ENCODE measurements at regions of chr9 and their contacts with region 1.

Region 1: DNA sequence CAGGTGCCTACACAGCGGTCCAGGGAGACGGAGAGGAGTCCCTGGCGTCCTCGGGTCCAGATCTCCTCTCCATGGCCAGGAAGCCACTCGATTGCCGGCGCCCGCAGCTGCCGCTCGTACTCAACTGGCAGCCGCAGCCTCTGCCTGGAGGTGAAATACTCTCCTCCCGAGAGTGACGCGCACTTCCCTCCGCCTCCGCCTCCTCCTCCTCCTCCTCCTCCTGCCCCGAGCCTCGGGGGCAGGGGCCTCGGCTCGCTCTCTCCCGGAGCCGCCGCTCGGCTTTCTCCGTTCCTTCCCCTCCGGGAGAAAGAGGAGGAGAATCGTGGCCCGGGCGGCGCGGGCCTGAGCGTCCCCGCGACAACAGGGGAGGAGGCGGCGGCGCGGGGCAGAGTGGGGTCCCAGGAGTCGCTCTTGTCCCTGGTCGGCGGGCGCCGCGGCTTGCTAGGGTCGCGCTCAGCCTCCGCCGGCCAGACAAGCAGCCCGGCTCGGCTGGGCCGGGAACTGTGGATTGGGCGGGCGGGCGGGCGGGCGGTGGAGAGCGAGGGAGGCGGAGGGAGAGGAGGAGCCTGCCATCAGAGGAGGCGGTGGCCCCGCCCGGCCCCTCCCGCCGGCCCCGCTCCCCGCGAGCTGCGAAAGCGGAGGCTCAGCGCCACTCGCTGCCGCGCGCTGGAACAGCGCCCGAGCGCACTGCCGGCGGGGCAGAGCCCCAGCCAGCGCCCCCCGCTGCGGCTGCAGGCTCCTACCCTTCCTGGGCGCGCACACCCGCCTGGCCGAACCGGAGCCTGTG is at the start of gene CEMIP2:
- DNase-seq: peak; percentile 84 to 91 (median 87)
- H3K4me3 ChIP-seq: peak within 1 kb of the TSS; percentile 98
- H3K4me3 Mint-ChIP-seq: peak within 1 kb of the TSS; percentile 91 to 100 (median 97)
- H3K27ac ChIP-seq: peak within 1 kb of the TSS; percentile 84
- H3K27ac Mint-ChIP-seq: peak within 1 kb of the TSS; percentile 94 to 99 (median 98)
- H3K4me1 ChIP-seq: peaks cover 37% of the 10 kb centered on the region
- H3K4me1 Mint-ChIP-seq: peaks cover 42 to 45% (median 45%) of the 10 kb centered on the region in 3 donors
- H3K27me3 ChIP-seq: no peaks in the 10 kb centered on the region
- H3K27me3 Mint-ChIP-seq: peaks cover 0 to 1% of the 10 kb centered on the region in 2 donors
- total RNA-seq, gene CEMIP2: 74.1 to 75.5 TPM

Region 2: DNA sequence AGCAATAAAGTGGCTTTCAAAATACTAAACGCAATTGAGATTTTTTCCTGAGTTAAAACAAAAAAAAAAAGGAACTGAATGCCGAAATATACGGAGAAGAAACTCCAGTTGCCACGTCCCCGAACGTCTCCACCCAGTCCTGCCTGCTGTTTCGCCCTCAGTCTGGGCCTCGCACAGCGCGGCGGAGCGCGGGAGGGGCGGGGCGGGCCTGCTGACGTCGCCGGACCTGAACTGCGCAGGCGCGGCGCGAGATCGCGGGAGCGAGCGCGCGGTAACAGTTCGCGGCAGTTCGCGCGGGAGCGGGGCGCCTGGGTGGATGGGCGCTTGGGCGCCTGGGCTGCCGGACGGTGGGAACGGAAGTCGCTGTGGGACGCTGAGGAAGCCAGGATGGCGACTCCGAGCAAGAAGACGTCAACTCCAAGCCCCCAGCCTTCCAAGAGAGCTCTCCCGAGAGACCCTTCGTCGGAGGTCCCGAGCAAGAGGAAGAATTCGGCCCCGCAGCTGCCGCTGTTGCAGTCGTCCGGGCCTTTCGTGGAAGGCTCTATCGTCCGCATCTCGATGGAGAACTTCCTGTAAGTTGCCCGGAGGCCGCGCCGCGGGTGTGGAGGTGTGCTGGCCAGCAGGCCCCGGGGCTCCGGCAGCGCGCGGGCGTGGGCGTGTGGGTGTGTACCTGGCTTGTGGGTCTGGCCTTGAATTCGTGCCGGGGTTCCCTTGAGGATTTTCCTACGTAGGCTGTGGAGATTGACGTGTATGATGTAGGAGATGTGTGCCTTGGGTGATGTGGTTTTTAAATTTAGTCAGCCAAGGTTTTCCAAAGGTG is 1509.7 kb before region 1 on chr9 and contains the start of gene SMC5:
- CTCF ChIA-PET with region 1: no interaction called
- POLR2A ChIA-PET with region 1: interaction called, 10 read pairs
- DNase-seq: peak; percentile 83 to 93 (median 91)
- H3K4me3 ChIP-seq: peak within 1 kb of the TSS; percentile 95
- H3K4me3 Mint-ChIP-seq: peak within 1 kb of the TSS; percentile 87 to 98 (median 95)
- H3K27ac ChIP-seq: peak within 1 kb of the TSS; percentile 92
- H3K27ac Mint-ChIP-seq: peak within 1 kb of the TSS; percentile 89 to 100 (median 98)
- H3K4me1 ChIP-seq: peaks cover 52% of the 10 kb centered on the region
- H3K4me1 Mint-ChIP-seq: peaks cover 48 to 59% (median 54%) of the 10 kb centered on the region in 3 donors
- H3K27me3 ChIP-seq: no peaks in the 10 kb centered on the region
- H3K27me3 Mint-ChIP-seq: peaks cover 0 to 2% of the 10 kb centered on the region in 2 donors
- total RNA-seq, gene SMC5: 42.2 TPM

Region 3: DNA sequence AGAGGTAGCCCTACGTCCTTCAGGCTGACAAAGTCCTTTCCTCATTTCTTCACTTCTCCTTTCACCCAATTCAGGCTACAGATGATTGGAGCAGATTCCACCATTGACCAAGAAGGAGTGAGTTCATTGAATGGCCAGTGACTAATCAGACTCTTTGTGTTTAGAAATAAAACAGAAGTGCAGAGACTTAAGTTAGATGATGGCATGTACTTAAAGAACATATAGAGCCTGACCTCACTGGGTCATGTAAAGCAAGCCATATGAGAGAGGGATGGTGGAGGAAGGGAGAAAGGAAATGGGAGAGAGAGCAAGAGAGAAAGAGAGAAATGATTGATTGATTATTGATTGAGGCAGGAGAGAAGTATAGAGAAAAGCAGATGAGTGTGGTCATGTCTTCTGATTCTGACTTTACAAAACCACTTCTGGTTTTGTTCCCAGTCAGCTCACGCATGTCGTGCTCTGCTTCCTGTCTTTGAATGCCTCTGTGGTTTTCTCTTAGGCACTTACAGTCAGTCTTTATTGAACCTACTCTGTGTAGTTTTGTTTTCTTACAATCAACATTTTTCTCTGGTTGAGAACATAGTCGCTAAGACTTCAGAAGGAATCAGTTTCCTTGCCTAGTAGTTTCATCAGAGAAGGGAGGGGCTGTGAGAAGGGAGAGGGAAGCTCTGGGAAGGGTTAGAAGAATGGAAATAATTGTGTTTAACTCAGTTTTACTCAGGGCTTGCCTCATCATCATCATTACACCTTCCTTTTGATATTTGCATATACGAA is 1205.0 kb before region 1 on chr9:
- CTCF ChIA-PET with region 1: no interaction called
- POLR2A ChIA-PET with region 1: no interaction called
- DNase-seq: peak in 3 of 5 donors; percentile 45 to 77 (median 59)
- H3K4me3 ChIP-seq: peak overlapping the region; percentile 22
- H3K4me3 Mint-ChIP-seq: peak overlapping the region in 6 of 7 donors; percentile 19 to 77 (median 62)
- H3K27ac ChIP-seq: no peak overlapping the region
- H3K27ac Mint-ChIP-seq: peak overlapping the region; percentile 3 to 92 (median 78)
- H3K4me1 ChIP-seq: peaks cover 33% of the 10 kb centered on the region
- H3K4me1 Mint-ChIP-seq: peaks cover 27 to 34% (median 28%) of the 10 kb centered on the region in 3 donors
- H3K27me3 ChIP-seq: no peaks in the 10 kb centered on the region
- H3K27me3 Mint-ChIP-seq: no peaks in the 10 kb centered on the region

Region 4: DNA sequence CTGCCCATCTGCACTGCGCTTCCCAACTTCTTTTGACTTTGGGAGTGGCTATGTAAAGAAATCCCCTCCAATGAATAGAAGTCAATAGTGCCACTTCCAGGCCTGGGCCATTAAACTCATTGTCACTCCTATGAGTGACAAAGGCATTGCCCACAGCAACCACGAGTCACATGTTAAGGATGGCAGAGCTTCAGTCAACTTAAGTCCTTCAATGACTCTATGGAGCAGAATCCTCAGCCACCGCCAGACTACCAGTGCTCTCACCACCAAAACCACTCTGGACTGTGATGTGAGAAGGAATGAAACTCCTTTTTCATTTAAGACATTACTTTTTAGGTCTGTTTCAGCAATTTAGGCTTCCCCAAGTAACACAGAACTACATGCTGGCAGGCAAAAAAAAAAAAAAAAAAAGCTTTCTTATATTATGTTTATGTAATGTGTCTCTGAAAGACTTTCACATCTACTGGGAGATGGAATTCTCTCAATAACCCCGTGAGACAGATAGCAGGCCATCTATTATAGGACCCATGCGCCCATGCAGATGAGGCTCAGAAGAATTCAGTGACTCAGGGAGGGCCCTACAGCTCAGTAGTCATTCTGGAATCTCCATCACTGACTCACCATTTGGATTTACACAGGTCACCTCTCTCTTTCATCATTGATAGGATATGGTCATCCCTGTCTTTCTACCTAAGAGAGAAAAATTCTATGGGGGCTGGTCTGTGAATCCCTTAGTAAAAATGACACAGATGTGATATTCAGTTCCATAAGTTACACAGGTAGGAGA is 180.8 kb before region 1 on chr9:
- CTCF ChIA-PET with region 1: no interaction called
- POLR2A ChIA-PET with region 1: no interaction called
- DNase-seq: no peak
- H3K4me3 ChIP-seq: no peak overlapping the region
- H3K4me3 Mint-ChIP-seq: no peak overlapping the region
- H3K27ac ChIP-seq: no peak overlapping the region
- H3K27ac Mint-ChIP-seq: no peak overlapping the region
- H3K4me1 ChIP-seq: no peaks in the 10 kb centered on the region
- H3K4me1 Mint-ChIP-seq: no peaks in the 10 kb centered on the region
- H3K27me3 ChIP-seq: no peaks in the 10 kb centered on the region
- H3K27me3 Mint-ChIP-seq: peaks cover 7 to 11% of the 10 kb centered on the region in 2 donors

Region 5: DNA sequence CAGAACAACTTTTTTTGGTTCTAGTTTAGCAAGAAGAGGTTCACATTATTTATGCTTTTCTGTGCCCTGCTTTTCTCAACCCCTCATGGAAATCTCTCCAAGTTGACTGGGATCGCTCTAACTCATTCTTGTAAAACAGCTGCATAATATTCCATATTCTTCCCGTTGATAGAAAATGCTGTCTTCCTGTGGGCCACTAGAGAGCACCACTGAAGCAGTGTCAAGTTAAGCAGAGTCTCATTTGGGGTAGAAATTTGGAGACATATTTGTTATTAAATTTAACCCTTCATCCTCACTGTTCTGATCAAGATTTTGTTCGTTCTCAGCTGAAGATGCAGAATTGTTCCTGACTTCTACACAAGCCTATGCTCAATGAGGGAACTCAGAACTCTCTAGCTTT is 140.3 kb before region 1 on chr9:
- CTCF ChIA-PET with region 1: interaction called, 10 read pairs
- POLR2A ChIA-PET with region 1: no interaction called
- DNase-seq: peak in 1 of 5 donors; percentile 6
- H3K4me3 ChIP-seq: no peak overlapping the region
- H3K4me3 Mint-ChIP-seq: no peak overlapping the region
- H3K27ac ChIP-seq: no peak overlapping the region
- H3K27ac Mint-ChIP-seq: no peak overlapping the region
- H3K4me1 ChIP-seq: no peaks in the 10 kb centered on the region
- H3K4me1 Mint-ChIP-seq: no peaks in the 10 kb centered on the region
- H3K27me3 ChIP-seq: no peaks in the 10 kb centered on the region
- H3K27me3 Mint-ChIP-seq: peaks cover 7 to 9% of the 10 kb centered on the region in 2 donors

Region 6: DNA sequence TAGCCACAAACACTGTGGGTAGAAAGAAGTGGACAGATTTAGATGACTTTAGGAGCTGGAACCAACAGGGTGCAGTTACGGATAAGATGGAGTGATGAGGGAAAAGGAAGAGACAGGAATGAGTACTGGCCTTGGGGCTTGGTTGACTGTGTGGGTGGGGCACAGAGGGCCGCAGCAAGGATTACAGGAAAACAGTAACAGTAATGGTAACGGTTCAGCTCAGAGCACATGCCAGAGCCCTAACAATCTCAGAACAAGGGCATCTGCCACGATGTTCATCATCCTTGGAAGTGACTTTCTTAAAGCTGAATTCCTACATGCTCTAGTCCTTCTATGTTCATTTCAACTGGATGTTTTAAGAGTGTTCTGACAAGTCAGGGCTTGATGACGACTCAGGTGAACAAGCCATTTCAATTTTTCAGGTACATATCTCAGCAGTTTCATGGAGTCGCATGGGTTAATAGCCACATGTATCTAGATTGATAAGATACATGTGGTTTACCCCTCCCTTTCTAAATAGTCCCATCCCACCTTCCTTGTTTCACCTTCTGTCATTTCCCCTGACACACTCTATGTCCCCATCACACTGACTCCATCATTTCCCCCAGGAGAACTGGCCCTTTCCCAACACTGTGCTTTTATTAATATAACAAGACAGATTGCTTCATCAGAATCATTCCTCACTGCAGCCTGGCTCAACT is 65.3 kb before region 1 on chr9:
- CTCF ChIA-PET with region 1: no interaction called
- POLR2A ChIA-PET with region 1: no interaction called
- DNase-seq: no peak
- H3K4me3 ChIP-seq: no peak overlapping the region
- H3K4me3 Mint-ChIP-seq: no peak overlapping the region
- H3K27ac ChIP-seq: no peak overlapping the region
- H3K27ac Mint-ChIP-seq: peak overlapping the region in 4 of 8 donors; percentile 20 to 72 (median 48)
- H3K4me1 ChIP-seq: no peaks in the 10 kb centered on the region
- H3K4me1 Mint-ChIP-seq: peaks cover 5 to 10% (median 6%) of the 10 kb centered on the region in 3 donors
- H3K27me3 ChIP-seq: no peaks in the 10 kb centered on the region
- H3K27me3 Mint-ChIP-seq: no peaks in the 10 kb centered on the region

Region 7: DNA sequence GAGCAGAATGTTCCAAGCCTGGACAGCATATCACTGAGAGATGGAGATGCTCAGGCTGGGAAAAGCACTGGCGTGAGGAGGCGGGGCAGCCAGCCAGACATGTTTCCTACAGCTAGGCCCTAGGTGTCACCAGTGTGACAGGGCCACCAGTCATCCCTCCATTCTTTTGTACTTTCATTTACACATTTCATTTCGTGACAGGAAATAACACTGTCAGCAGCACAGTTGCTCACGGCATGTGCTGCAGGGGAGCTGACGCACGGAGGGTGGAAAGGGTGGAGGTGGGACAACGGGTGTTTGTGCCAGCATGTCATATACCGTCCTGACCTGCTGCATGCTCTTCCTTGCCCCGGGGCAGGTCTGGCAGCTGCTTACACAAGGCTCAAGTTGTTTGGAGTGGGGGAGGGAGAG is 14.5 kb after region 1 on chr9:
- CTCF ChIA-PET with region 1: interaction called, 74 read pairs
- POLR2A ChIA-PET with region 1: interaction called, 32 read pairs
- DNase-seq: peak; percentile 73 to 95 (median 88)
- H3K4me3 ChIP-seq: peak overlapping the region; percentile 7
- H3K4me3 Mint-ChIP-seq: peak overlapping the region; percentile 6 to 84 (median 80)
- H3K27ac ChIP-seq: peak overlapping the region; percentile 77
- H3K27ac Mint-ChIP-seq: peak overlapping the region; percentile 89 to 100 (median 98)
- H3K4me1 ChIP-seq: peaks cover 39% of the 10 kb centered on the region
- H3K4me1 Mint-ChIP-seq: peaks cover 47 to 59% (median 49%) of the 10 kb centered on the region in 3 donors
- H3K27me3 ChIP-seq: no peaks in the 10 kb centered on the region
- H3K27me3 Mint-ChIP-seq: no peaks in the 10 kb centered on the region

Region 8: GRCh38 chr9:71806901-71807307 is 38.3 kb after region 1 on chr9:
- CTCF ChIA-PET with region 1: interaction called, 19 read pairs
- POLR2A ChIA-PET with region 1: interaction called, 3 read pairs
- DNase-seq: peak; percentile 29 to 77 (median 56)
- H3K4me3 ChIP-seq: no peak overlapping the region
- H3K4me3 Mint-ChIP-seq: no peak overlapping the region
- H3K27ac ChIP-seq: no peak overlapping the region
- H3K27ac Mint-ChIP-seq: peak overlapping the region in 4 of 8 donors; percentile 8 to 81 (median 29)
- H3K4me1 ChIP-seq: peaks cover 9% of the 10 kb centered on the region
- H3K4me1 Mint-ChIP-seq: peaks cover 7% of the 10 kb centered on the region in 3 donors
- H3K27me3 ChIP-seq: no peaks in the 10 kb centered on the region
- H3K27me3 Mint-ChIP-seq: no peaks in the 10 kb centered on the region

Region 9: DNA sequence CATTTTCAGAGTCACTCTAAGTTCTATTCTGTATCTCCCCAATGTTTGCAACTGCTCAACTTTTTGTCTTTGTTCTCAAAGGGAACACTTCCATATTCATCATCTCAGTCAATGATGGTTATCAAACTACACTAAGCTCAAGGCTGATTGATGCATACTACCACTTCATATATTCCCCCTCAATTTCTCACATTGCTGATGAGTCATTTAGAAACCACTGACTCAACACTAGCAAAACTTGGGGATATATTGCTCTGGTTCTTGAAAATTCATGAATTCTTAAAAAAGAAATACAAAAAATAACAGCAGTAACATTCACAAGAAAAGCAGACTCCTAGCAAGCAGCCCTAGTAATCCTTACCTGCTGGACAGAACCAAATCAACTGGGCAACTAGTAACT is 90.2 kb after region 1 on chr9:
- CTCF ChIA-PET with region 1: no interaction called
- POLR2A ChIA-PET with region 1: no interaction called
- DNase-seq: no peak
- H3K4me3 ChIP-seq: no peak overlapping the region
- H3K4me3 Mint-ChIP-seq: no peak overlapping the region
- H3K27ac ChIP-seq: no peak overlapping the region
- H3K27ac Mint-ChIP-seq: no peak overlapping the region
- H3K4me1 ChIP-seq: no peaks in the 10 kb centered on the region
- H3K4me1 Mint-ChIP-seq: peaks cover 0 to 1% (median 0%) of the 10 kb centered on the region in 3 donors
- H3K27me3 ChIP-seq: no peaks in the 10 kb centered on the region
- H3K27me3 Mint-ChIP-seq: no peaks in the 10 kb centered on the region

Measured in CD8-positive, alpha-beta memory T cell (primary cell).